ENCODE measurements at regions of chr17 and their contacts with region 1.

Region 1: DNA sequence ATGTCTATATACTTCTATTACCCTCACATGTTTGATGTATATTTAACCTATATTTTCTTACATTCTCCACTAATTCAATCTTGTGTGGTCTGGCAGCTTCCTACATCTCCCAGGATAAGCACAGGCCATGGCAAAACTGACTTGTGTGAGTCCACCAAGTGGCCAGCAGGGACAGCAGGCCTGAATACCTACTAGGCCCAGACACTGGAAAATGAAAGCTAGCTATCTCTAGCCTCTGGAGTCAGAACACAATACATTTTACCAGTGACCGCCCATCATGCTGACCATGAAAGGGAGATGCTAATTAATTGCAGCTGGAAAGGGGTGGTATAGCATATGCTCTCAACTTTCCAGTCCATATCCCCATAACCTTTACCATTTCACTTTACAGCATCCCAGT is 132.3 kb downstream of the PCTP start:
- DNase-seq: no peak
- ATAC-seq: no peak
- H3K4me3 ChIP-seq: no peak overlapping the region
- H3K4me3 Mint-ChIP-seq: no peak overlapping the region
- H3K27ac ChIP-seq: no peak overlapping the region
- H3K27ac Mint-ChIP-seq: no peak overlapping the region
- H3K4me1 ChIP-seq: no peaks in the 10 kb centered on the region
- H3K4me1 Mint-ChIP-seq: no peaks in the 10 kb centered on the region
- H3K27me3 ChIP-seq: no peaks in the 10 kb centered on the region
- H3K27me3 Mint-ChIP-seq: no peaks in the 10 kb centered on the region
- CTCF ChIP-seq: no peak

Region 2: DNA sequence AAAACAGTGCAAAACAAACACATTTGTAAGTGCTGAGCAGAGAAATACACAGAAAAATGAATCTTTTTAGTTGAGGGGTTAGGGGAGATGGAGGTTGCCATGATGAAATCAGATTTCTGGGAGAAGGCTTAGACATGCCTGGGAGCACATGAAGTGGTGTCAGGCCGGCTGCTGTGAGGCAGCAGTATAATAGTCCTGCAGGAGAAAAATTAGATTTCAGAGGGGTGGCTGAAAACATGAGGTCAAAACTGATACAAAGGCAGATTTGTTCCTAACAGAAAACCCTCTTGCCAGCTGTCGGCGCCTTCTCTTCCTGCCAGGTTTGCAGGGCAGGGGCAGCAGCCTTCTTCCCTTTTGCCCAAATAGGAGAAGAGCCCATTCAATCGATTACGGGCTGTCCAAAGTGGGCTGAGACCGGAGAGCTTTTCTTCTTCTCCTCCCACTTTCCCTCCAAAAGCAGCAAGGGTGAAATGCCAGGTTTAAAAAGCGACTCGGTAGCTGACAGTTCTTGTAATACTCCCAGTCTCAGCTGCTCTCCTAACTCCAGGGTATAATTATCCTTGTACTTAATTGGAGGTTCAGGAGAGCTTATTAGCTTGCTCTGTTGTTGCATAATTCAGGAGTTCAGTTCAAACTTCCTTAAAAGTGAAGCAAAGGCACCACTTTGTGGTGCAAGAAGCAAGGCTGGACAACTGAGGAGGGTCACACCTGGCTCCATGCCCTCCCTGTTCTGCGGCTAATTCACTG is 52.3 kb before region 1 on chr17:
- CTCF ChIA-PET with region 1: no interaction called
- POLR2A ChIA-PET with region 1: no interaction called
- intact Hi-C with region 1: loop called in 1 of 2 experiments (anchors 5 kb)
- DNase-seq: no peak
- ATAC-seq: no peak
- H3K4me3 ChIP-seq: no peak overlapping the region
- H3K4me3 Mint-ChIP-seq: no peak overlapping the region
- H3K27ac ChIP-seq: no peak overlapping the region
- H3K27ac Mint-ChIP-seq: no peak overlapping the region
- H3K4me1 ChIP-seq: no peaks in the 10 kb centered on the region
- H3K4me1 Mint-ChIP-seq: no peaks in the 10 kb centered on the region
- H3K27me3 ChIP-seq: no peaks in the 10 kb centered on the region
- H3K27me3 Mint-ChIP-seq: peaks cover 12% of the 10 kb centered on the region
- CTCF ChIP-seq: no peak

Region 3: GRCh38 chr17:55903028-55903690 is 20.0 kb after region 1 on chr17:
- CTCF ChIA-PET with region 1: no interaction called
- POLR2A ChIA-PET with region 1: no interaction called
- intact Hi-C with region 1: no loop called
- DNase-seq: no peak
- ATAC-seq: no peak
- H3K4me3 ChIP-seq: no peak overlapping the region
- H3K4me3 Mint-ChIP-seq: no peak overlapping the region
- H3K27ac ChIP-seq: no peak overlapping the region
- H3K27ac Mint-ChIP-seq: no peak overlapping the region
- H3K4me1 ChIP-seq: no peaks in the 10 kb centered on the region
- H3K4me1 Mint-ChIP-seq: no peaks in the 10 kb centered on the region
- H3K27me3 ChIP-seq: no peaks in the 10 kb centered on the region
- H3K27me3 Mint-ChIP-seq: peaks cover 6% of the 10 kb centered on the region
- CTCF ChIP-seq: no peak